HCT116 (cell line): ENCODE measurements at regions of chr6 and their contacts with region 1.

Region 1: GRCh38 chr6:119147101-119148053 is 68.9 kb upstream of the FAM184A start:
- DNase-seq: peak; percentile 96
- ATAC-seq: peak; percentile 86
- H3K4me3 ChIP-seq: peak overlapping the region; percentile 1 to 41
- H3K27ac ChIP-seq: peak overlapping the region; percentile 83
- H3K4me1 ChIP-seq: peaks cover 53 to 56% of the 10 kb centered on the region in 2 experiments
- H3K27me3 ChIP-seq: no peaks in the 10 kb centered on the region
- CTCF ChIP-seq: no peak
- POLR2A ChIP-seq: peak; percentile 28
- RAD21 ChIP-seq: peak; percentile 26

Region 2: DNA sequence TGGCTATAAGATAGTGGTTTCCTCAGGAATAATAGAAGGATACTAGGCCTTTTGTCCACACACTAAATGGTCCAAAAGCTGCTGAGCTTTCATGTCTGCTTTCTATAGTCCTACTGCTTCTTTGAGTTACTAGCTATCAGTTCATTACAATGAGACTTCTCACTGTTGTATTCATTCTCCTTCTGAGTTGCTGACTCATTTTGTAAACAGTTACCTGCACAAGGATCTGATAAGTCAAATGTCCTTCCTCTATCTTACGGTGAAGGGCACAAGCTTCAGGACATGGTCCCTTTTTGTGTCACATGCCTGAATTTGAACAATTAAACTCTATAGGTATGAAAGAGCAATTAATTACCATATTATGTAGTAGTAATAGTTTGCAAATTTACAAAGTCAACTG is 111.7 kb after region 1 on chr6:
- CTCF ChIA-PET with region 1: interaction called, 3 read pairs
- POLR2A ChIA-PET with region 1: no interaction called
- RAD21 ChIA-PET with region 1: interaction called in 1 of 2 experiments, 3 read pairs
- intact Hi-C with region 1: loop called (anchors 1 kb)
- DNase-seq: peak; percentile 55
- ATAC-seq: peak; percentile 37
- H3K4me3 ChIP-seq: peak overlapping the region in 1 of 2 experiments; percentile 4; a peak in 1 of 4 replicates
- H3K27ac ChIP-seq: peak overlapping the region; percentile 55; the same call in 1 of the 2 replicates
- H3K4me1 ChIP-seq: peaks cover 66 to 71% of the 10 kb centered on the region in 2 experiments
- H3K27me3 ChIP-seq: no peaks in the 10 kb centered on the region
- CTCF ChIP-seq: no peak
- POLR2A ChIP-seq: no peak
- RAD21 ChIP-seq: no peak

Region 3: GRCh38 chr6:119727504-119728217 is 580.3 kb after region 1 on chr6:
- CTCF ChIA-PET with region 1: interaction called, 11 read pairs
- POLR2A ChIA-PET with region 1: no interaction called
- RAD21 ChIA-PET with region 1: no interaction called
- intact Hi-C with region 1: loop called (anchors 2 kb)
- DNase-seq: no peak
- ATAC-seq: peak; percentile 90
- H3K4me3 ChIP-seq: no peak overlapping the region
- H3K27ac ChIP-seq: peak overlapping the region; percentile 52
- H3K4me1 ChIP-seq: peaks cover 16 to 18% of the 10 kb centered on the region in 2 experiments
- H3K27me3 ChIP-seq: no peaks in the 10 kb centered on the region
- CTCF ChIP-seq: peak in 2 of 3 experiments; percentile 42 to 44; a peak in 4 of 6 replicates
- POLR2A ChIP-seq: no peak
- RAD21 ChIP-seq: no peak

Region 4: GRCh38 chr6:119978274-119978889 is 831.0 kb after region 1 on chr6:
- CTCF ChIA-PET with region 1: no interaction called
- POLR2A ChIA-PET with region 1: no interaction called
- RAD21 ChIA-PET with region 1: interaction called in 1 of 2 experiments, 5 read pairs
- intact Hi-C with region 1: loop called (anchors 2 kb)
- DNase-seq: no peak
- ATAC-seq: peak; percentile 81
- H3K4me3 ChIP-seq: no peak overlapping the region
- H3K27ac ChIP-seq: no peak overlapping the region
- H3K4me1 ChIP-seq: no peaks in the 10 kb centered on the region
- H3K27me3 ChIP-seq: no peaks in the 10 kb centered on the region
- CTCF ChIP-seq: peak; percentile 50 to 75 (median 72); a peak in 5 of 6 replicates
- POLR2A ChIP-seq: no peak
- RAD21 ChIP-seq: peak; percentile 58

Region 5: DNA sequence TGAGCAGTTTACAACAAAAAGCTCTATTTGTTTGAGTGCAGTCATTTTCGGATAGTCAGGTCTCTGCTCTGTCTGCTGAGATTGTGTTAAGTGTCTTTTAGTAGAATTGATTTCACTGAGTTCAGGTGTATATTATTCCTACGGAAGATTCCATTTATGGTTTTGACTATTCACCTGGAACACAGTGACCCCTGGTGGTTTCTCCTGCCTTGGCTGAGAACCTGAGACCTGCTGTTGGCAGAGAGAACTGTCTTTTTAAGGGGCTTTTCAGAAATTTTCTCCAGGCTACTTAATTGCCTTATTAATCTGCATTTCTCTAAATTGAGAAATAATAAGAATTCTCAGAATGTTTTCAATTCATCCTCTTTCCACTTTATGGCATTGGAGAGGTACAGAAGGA is 1678.9 kb after region 1 on chr6:
- CTCF ChIA-PET with region 1: interaction called, 5 read pairs
- POLR2A ChIA-PET with region 1: no interaction called
- RAD21 ChIA-PET with region 1: no interaction called
- intact Hi-C with region 1: loop called (anchors 5 kb)
- DNase-seq: peak; percentile 53
- ATAC-seq: peak; percentile 87
- H3K4me3 ChIP-seq: no peak overlapping the region
- H3K27ac ChIP-seq: no peak overlapping the region
- H3K4me1 ChIP-seq: no peaks in the 10 kb centered on the region
- H3K27me3 ChIP-seq: no peaks in the 10 kb centered on the region
- CTCF ChIP-seq: peak; percentile 65 to 84 (median 84); a peak in 5 of 6 replicates
- POLR2A ChIP-seq: no peak
- RAD21 ChIP-seq: peak; percentile 79